A549 (cell line): ENCODE measurements at regions of chr4 and their contacts with region 1.

Region 1: DNA sequence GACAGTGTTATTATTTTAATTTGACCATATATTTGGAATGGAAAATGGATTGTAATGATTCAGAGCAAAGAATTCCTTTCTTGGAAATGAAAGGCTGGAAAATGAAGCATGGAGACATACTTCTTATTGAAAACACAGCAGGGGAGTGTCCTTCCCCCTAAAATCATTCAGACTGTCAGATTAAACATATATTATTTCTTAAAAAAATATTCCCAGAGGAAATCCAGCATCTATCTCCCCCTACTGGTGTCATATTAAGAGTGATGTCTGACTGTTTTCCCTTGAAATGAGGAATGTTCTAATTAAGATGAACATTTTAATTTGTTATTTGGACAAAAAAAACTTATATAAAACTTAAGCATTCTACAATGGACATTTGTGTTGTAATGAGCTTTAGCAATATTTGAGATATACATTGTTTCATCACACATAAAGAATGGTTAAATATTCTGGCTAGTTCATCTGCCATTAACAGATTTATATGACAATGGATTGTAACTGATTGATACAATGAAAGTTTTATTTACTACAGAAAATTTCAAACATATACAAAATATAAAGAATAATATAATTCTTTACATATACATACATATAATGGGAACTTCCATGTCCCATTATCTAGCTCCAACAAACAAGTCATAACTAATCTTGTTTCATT is 264.6 kb downstream of the SPRY1 start:
- DNase-seq: peak in 1 of 2 experiments; percentile 10
- ATAC-seq: no peak
- H3K4me3 ChIP-seq: no peak overlapping the region
- H3K27ac ChIP-seq: no peak overlapping the region
- H3K4me1 ChIP-seq: no peaks in the 10 kb centered on the region
- CTCF ChIP-seq: peak; percentile 65
- EP300 ChIP-seq: no peak
- POLR2A ChIP-seq: no peak
- RAD21 ChIP-seq: peak; percentile 65 to 76

Region 2: GRCh38 chr4:123113155-123113554 is 548.1 kb before region 1 on chr4:
- CTCF ChIA-PET with region 1: no interaction called
- POLR2A ChIA-PET with region 1: no interaction called
- DNase-seq: no peak
- ATAC-seq: no peak
- H3K4me3 ChIP-seq: no peak overlapping the region
- H3K27ac ChIP-seq: no peak overlapping the region
- H3K4me1 ChIP-seq: peaks cover 7% of the 10 kb centered on the region; the same call in 2 of the 3 replicates
- CTCF ChIP-seq: no peak
- EP300 ChIP-seq: no peak
- POLR2A ChIP-seq: no peak
- RAD21 ChIP-seq: no peak

Region 3: DNA sequence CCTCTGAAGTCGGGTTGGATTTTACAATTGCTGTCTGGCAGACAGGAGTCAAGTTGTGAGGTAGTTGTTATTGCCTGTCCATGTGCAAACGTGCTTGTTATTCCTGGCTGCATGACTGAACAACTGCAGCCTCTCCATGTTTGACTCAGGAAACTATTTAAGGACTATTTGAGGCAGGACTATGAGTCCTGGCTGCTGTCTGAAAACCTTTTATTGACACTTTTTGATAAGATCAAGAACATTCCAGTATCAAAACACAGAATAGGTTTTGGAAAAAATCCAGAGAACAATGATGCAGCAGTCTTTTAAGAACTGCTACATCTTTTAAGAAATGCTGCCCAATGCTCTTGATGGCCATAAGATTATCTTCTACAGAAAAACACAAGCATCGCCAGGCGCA is 274.6 kb before region 1 on chr4:
- CTCF ChIA-PET with region 1: interaction called, 10 read pairs
- POLR2A ChIA-PET with region 1: no interaction called
- DNase-seq: no peak
- ATAC-seq: no peak
- H3K4me3 ChIP-seq: no peak overlapping the region
- H3K27ac ChIP-seq: no peak overlapping the region; a peak in 1 of 6 replicates
- H3K4me1 ChIP-seq: no peaks in the 10 kb centered on the region
- CTCF ChIP-seq: no peak
- EP300 ChIP-seq: no peak
- POLR2A ChIP-seq: no peak
- RAD21 ChIP-seq: no peak

Region 4: DNA sequence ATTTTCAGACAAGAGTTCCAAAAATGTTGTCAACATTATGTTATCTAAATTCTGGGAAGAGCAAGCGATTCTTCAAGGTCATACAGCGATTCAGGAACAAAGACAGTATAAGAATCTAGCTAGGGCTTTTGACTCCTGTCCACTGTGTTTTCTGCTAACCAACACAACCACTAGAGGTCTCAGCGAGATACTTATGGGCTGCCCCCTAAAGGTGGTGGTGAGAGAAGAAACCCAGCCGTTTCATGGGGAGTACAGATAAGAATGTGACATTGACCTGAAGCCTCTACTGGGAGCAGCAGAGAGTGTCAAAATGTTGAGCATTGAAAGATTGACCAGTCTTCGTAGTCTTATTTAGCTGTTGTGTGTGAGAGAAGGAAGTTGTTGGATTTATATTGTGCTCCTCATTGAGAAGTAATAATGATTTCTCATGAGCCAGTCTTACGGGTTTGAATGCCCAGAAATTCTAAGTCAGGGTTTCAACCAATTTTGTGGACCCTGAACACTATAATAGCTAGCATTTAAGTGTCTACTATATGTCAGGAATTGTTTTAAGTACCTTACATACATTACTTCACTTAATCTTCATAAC is 96.4 kb before region 1 on chr4:
- CTCF ChIA-PET with region 1: interaction called, 17 read pairs
- POLR2A ChIA-PET with region 1: no interaction called
- DNase-seq: peak; percentile 74 to 81
- ATAC-seq: peak; percentile 100
- H3K4me3 ChIP-seq: no peak overlapping the region
- H3K27ac ChIP-seq: no peak overlapping the region
- H3K4me1 ChIP-seq: peaks cover 20% of the 10 kb centered on the region
- CTCF ChIP-seq: peak; percentile 85
- EP300 ChIP-seq: no peak
- POLR2A ChIP-seq: no peak
- RAD21 ChIP-seq: peak; percentile 68 to 76

Region 5: GRCh38 chr4:123593655-123594054 is 67.6 kb before region 1 on chr4:
- CTCF ChIA-PET with region 1: no interaction called
- POLR2A ChIA-PET with region 1: no interaction called
- DNase-seq: no peak
- ATAC-seq: no peak
- H3K4me3 ChIP-seq: no peak overlapping the region
- H3K27ac ChIP-seq: no peak overlapping the region
- H3K4me1 ChIP-seq: peaks cover 17% of the 10 kb centered on the region
- CTCF ChIP-seq: no peak
- EP300 ChIP-seq: no peak
- POLR2A ChIP-seq: no peak
- RAD21 ChIP-seq: no peak